Mammary epithelial cell (primary cell): ENCODE measurements at regions of chr5 and their contacts with region 1.

Region 1: GRCh38 chr5:107289030-107289714 is 381.6 kb downstream of the EFNA5 start:
- DNase-seq: peak; percentile 85
- H3K4me3 ChIP-seq: no peak overlapping the region
- H3K27ac ChIP-seq: no peak overlapping the region
- H3K4me1 ChIP-seq: peaks cover 22% of the 10 kb centered on the region
- H3K27me3 ChIP-seq: no peaks in the 10 kb centered on the region
- CTCF ChIP-seq: no peak

Region 2: DNA sequence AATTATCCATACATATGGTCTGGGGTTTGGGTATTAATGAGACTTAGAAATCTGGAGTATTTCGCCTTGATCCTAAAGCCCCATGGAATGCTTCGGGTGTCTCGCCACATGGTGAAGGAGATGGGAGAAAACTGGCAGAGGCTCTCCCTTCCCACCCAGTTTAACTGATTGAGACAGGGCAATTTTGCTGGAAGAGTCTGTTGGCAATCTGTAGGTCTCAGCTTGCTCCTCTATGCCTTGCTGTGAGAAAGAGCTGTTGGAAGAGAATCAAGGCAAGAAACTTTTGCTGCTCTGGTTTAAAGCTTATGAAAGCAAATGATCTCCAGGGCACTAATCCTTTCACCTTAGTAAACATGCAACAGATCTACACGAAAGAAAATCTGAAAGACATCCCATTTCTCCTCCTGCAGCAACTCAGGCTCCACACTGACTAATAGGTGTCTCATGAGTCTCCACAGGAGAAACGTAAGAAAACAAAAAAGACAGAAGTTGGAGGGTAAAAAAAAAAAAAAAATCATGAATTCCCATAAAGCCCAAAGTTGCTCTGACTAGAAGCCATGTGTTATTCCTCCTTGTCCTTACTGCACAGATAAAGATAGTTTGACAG is 11.7 kb after region 1 on chr5:
- CTCF ChIA-PET with region 1: no interaction called
- dilution Hi-C with region 1: no loop called
- in situ Hi-C with region 1: no loop called
- intact Hi-C with region 1: loop called (anchors 2 kb)
- DNase-seq: peak; percentile 26
- H3K4me3 ChIP-seq: no peak overlapping the region
- H3K27ac ChIP-seq: no peak overlapping the region
- H3K4me1 ChIP-seq: no peaks in the 10 kb centered on the region
- H3K27me3 ChIP-seq: no peaks in the 10 kb centered on the region
- CTCF ChIP-seq: no peak

Region 3: DNA sequence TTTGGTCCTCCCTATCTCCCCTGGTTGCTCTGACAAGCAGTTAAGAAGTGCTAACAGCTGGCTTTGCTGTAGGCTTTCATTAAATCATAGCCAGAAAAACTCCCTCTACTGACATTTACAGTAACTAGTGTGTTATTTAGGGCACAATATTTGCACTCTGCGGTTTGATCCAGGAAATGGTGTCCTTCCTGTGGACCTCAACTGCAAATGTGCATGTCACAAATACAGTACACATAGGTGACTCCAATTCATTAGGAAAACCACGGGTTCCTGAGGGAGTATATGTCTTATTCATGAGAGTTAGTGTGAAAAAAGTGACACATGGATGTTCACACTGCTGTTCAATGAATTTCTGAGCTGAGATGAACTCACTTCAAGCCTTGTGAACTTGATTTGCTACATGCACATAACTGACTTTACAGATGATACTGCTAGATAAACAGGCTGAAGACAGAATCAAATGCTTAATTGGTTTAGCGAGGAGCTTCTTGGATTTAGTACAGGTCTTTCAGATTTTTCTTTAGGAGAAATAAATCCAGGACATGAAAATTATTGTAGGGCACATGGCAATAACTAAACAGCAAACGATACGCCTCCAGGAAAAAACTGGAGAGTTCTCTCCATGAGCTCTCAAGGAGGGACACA is 100.1 kb after region 1 on chr5:
- CTCF ChIA-PET with region 1: no interaction called
- dilution Hi-C with region 1: no loop called
- in situ Hi-C with region 1: loop called in 1 of 2 experiments (anchors 5 kb)
- intact Hi-C with region 1: no loop called
- DNase-seq: peak; percentile 51
- H3K4me3 ChIP-seq: no peak overlapping the region
- H3K27ac ChIP-seq: peak overlapping the region; percentile 92
- H3K4me1 ChIP-seq: peaks cover 32% of the 10 kb centered on the region
- H3K27me3 ChIP-seq: no peaks in the 10 kb centered on the region
- CTCF ChIP-seq: peak in 1 of 2 donors; percentile 17